ENCODE measurements at regions of chr6 and their contacts with region 1.

Region 1: DNA sequence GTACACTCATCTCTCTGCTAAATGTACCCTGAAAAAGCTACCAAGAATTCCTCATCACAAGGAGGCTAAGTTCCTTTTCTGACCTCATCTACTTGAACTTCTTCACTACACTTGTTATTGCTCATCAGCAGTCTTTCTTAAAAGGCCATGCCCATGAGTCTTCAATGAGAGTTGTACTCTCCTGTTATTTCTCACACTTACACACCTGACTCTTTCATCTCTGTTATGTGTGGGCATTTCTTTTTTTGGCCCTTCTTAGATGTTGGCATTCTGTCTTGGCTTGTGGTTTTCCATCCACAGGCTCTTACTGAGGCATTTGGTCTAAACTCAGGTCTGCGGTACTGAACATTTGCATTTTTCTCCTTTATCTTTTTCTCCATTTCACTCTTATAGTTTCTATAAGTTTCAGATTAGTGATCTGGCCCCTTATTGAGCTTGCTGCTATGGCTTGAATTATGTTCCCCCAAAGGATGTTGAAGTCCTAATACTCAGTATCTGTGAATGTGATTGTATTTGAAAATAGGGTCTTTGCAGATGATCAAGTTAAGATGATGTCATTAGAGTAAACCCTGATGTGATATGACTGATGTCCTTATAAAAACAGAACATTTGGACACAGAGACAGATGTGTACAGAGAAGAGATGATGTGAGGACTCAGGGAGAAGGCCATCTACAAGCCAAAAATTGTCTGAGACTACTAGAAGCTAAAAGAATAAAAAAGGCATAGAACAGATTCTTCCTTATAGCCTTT is 10.8 kb upstream of the SLC17A1 start:
- DNase-seq: no peak
- ATAC-seq: no peak
- H3K4me3 ChIP-seq: no peak overlapping the region
- H3K4me3 Mint-ChIP-seq: no peak overlapping the region
- H3K27ac ChIP-seq: no peak overlapping the region
- H3K27ac Mint-ChIP-seq: no peak overlapping the region
- H3K4me1 ChIP-seq: no peaks in the 10 kb centered on the region
- H3K4me1 Mint-ChIP-seq: no peaks in the 10 kb centered on the region
- H3K27me3 ChIP-seq: no peaks in the 10 kb centered on the region
- H3K27me3 Mint-ChIP-seq: peaks cover 5% of the 10 kb centered on the region
- CTCF ChIP-seq: no peak

Region 2: GRCh38 chr6:25882051-25882496 is 39.4 kb after region 1 on chr6:
- CTCF ChIA-PET with region 1: no interaction called
- POLR2A ChIA-PET with region 1: no interaction called
- intact Hi-C with region 1: loop called in 1 of 2 experiments (anchors 5 kb)
- DNase-seq: peak in 6 of 9 experiments; percentile 5 to 71 (median 55)
- ATAC-seq: peak; percentile 85
- H3K4me3 ChIP-seq: peak overlapping the region in 1 of 2 experiments; percentile 42
- H3K4me3 Mint-ChIP-seq: peak overlapping the region; percentile 89
- H3K27ac ChIP-seq: no peak overlapping the region
- H3K27ac Mint-ChIP-seq: peak overlapping the region; percentile 87
- H3K4me1 ChIP-seq: no peaks in the 10 kb centered on the region
- H3K4me1 Mint-ChIP-seq: peaks cover 2% of the 10 kb centered on the region
- H3K27me3 ChIP-seq: no peaks in the 10 kb centered on the region
- H3K27me3 Mint-ChIP-seq: peaks cover 3% of the 10 kb centered on the region
- CTCF ChIP-seq: peak; percentile 33

Region 3: GRCh38 chr6:26025894-26026832 is 183.5 kb after region 1 on chr6:
- CTCF ChIA-PET with region 1: no interaction called
- POLR2A ChIA-PET with region 1: no interaction called
- intact Hi-C with region 1: no loop called
- DNase-seq: peak; percentile 74 to 99 (median 89)
- ATAC-seq: peak; percentile 43
- H3K4me3 ChIP-seq: peak overlapping the region; percentile 50 to 76
- H3K4me3 Mint-ChIP-seq: peak overlapping the region; percentile 86
- H3K27ac ChIP-seq: peak overlapping the region; percentile 93 to 96
- H3K27ac Mint-ChIP-seq: peak overlapping the region; percentile 98
- H3K4me1 ChIP-seq: peaks cover 25% of the 10 kb centered on the region
- H3K4me1 Mint-ChIP-seq: peaks cover 48% of the 10 kb centered on the region
- H3K27me3 ChIP-seq: no peaks in the 10 kb centered on the region
- H3K27me3 Mint-ChIP-seq: no peaks in the 10 kb centered on the region
- CTCF ChIP-seq: peak; percentile 80

Measured in CD8-positive, alpha-beta T cell (primary cell).